Left ventricle myocardium superior (tissue), 1 donor: ENCODE measurements at regions of chr15 and their contacts with region 1.

Region 1: DNA sequence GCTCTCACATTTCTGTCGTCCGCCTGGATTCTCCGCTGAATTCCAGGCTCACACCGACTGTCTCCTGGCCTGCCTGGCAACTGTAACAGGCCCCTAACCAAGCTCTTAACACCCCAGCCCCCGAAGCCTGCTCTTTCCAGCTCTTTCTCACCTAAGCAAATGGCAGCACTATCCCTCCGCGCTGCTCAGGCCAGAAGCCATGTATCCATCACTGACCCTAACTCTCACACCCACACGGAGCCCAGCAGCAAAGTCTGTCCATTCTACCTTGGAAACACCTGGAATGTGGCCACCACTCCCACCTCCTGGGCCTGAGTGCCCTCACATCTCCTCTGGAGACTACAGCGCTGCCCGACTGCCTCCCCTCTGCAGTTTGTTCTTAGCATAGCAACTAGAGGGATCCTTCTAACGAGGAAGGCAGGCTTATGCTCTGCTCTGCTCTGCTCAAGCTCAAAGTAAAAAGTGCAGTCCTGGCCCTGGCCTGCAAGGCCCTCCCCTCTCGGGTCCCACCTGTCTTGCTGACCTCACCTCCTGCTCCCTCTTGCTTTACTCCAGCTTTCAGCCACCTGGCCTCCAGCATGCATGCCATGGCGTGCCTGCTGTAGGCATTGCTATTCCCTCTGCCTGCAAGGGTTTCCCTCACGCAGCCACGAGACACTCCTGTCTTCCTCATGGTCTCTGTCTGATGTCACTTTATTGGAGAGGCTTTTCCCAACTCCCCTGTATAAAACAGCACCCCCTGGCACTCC is 27.2 kb downstream of the FEM1B start:
- DNase-seq: no peak
- ATAC-seq: no peak

Region 2: GRCh38 chr15:67850995-67851571 is 453.7 kb before region 1 on chr15:
- intact Hi-C with region 1: no loop called
- DNase-seq: no peak
- ATAC-seq: no peak

Region 3: GRCh38 chr15:68234060-68234459 is 70.7 kb before region 1 on chr15:
- intact Hi-C with region 1: no loop called
- DNase-seq: no peak
- ATAC-seq: no peak

Region 4: GRCh38 chr15:68365140-68365745 is 60.5 kb after region 1 on chr15:
- intact Hi-C with region 1: loop called (anchors 5 kb)
- DNase-seq: peak; percentile 62
- ATAC-seq: peak; percentile 82

Region 5: DNA sequence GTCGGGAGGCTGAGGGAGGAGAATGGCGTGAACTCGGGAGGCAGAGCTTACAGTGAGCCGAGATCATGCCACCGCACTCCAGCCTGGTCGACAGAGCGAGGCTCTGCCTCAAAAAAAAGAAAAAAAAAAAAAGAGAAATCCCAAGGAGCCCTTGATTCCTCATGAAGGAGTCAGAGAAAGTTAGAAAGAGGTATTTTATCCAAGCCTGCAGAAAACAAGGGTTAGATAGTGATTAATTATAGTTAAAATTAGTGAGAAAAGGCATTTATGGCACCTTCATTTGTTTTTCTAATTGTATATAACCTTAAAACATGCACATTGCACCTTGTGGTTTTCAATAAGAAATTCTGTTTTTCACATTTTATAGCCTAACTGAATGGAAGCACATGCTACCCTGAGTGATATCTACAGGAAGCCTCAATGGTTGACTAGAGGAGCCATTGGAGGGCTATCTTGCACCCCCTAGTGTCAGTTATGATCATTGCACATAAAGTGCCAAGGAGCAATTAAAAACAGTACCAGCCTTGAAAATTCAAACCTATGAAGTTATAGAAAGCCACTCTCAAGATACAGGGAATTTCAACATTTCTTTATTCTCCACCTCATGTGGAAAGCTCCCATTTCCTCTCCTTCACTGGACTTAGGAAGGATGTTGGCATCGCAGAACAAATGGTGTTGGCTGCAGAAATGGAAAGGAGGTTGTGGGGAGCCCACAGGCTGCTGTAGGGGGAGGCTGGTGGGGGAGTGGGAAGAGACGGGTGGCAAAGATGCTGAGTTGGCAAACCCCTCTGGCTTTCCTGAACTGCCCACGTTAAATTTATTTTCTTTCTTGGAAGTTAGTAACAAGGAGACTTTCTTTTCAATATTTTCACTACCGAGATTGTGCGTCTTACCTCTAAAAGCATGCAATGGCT is 78.7 kb after region 1 on chr15:
- intact Hi-C with region 1: loop called (anchors 5 kb)
- DNase-seq: no peak
- ATAC-seq: peak; percentile 72